AG04449 (cell line): ENCODE measurements at regions of chr18 and their contacts with region 1.

Region 1: DNA sequence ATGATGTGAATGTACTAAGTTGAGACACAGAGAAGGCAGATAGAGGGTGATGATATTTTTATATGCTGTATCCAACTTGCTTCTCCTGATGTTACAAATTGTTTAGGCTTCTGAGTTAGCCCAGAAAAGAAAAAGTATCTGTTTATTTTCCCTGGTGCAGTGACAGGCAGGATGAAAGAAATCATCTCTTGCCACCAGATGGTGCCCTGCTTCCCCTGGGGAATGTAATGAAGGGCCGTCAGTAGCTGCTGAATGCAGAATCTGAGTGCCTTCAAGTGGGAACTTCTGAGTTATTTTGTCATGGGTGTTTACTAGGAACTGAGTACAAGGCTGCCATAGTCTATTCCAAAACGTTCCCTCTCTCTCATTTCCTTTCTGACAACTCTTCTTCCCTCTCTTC is 525.6 kb downstream of the MBD2 start:
- DNase-seq: peak; percentile 5
- H3K4me3 ChIP-seq: no peak overlapping the region
- CTCF ChIP-seq: peak; percentile 65

Region 2: GRCh38 chr18:53864770-53865169 is 165.9 kb after region 1 on chr18:
- CTCF ChIA-PET with region 1: interaction called, 10 read pairs
- POLR2A ChIA-PET with region 1: no interaction called
- DNase-seq: no peak
- H3K4me3 ChIP-seq: no peak overlapping the region
- CTCF ChIP-seq: no peak